Activated CD4-positive, alpha-beta memory T cell treated with anti-CD3 and anti-CD28 coated beads for 36 hours (primary cell): ENCODE measurements at regions of chr3 and their contacts with region 1.

Region 1: GRCh38 chr3:143016321-143016972 is 15.1 kb downstream of the U2SURP start:
- DNase-seq: no peak
- H3K4me3 Mint-ChIP-seq: no peak overlapping the region
- H3K27ac Mint-ChIP-seq: no peak overlapping the region
- H3K4me1 Mint-ChIP-seq: peaks cover 18% of the 10 kb centered on the region
- H3K27me3 Mint-ChIP-seq: no peaks in the 10 kb centered on the region

Region 2: GRCh38 chr3:142904639-142905436 is 111.6 kb before region 1 on chr3:
- CTCF ChIA-PET with region 1: no interaction called
- POLR2A ChIA-PET with region 1: no interaction called
- intact Hi-C with region 1: no loop called
- DNase-seq: no peak
- H3K4me3 Mint-ChIP-seq: no peak overlapping the region
- H3K27ac Mint-ChIP-seq: no peak overlapping the region
- H3K4me1 Mint-ChIP-seq: peaks cover 3% of the 10 kb centered on the region
- H3K27me3 Mint-ChIP-seq: peaks cover 21% of the 10 kb centered on the region

Region 3: GRCh38 chr3:142929109-142929508 is 87.3 kb before region 1 on chr3:
- CTCF ChIA-PET with region 1: no interaction called
- POLR2A ChIA-PET with region 1: no interaction called
- intact Hi-C with region 1: no loop called
- DNase-seq: peak; percentile 60
- H3K4me3 Mint-ChIP-seq: no peak overlapping the region
- H3K27ac Mint-ChIP-seq: no peak overlapping the region
- H3K4me1 Mint-ChIP-seq: no peaks in the 10 kb centered on the region
- H3K27me3 Mint-ChIP-seq: peaks cover 30% of the 10 kb centered on the region

Region 4: DNA sequence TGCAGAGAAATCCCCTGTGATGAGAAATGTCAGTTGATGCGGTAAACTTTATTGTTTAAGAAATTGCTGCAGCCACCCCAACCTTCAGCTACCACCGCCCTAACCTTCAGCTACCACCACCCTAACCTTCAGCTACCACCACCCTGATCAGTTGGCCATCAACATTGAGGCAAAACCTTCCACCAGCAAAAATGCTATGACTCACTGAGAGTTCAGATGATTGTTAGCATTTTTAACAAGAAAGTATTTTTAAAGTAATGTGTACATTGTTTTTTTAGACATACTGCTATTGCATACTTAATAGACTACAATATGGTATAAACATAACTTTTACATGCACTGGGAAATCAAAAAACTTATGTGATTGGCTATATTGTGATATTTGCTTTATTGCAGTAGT is 14.9 kb after region 1 on chr3:
- CTCF ChIA-PET with region 1: interaction called, 5 read pairs
- POLR2A ChIA-PET with region 1: no interaction called
- intact Hi-C with region 1: loop called (anchors 2 kb)
- DNase-seq: no peak
- H3K4me3 Mint-ChIP-seq: no peak overlapping the region
- H3K27ac Mint-ChIP-seq: no peak overlapping the region
- H3K4me1 Mint-ChIP-seq: peaks cover 7% of the 10 kb centered on the region
- H3K27me3 Mint-ChIP-seq: no peaks in the 10 kb centered on the region

Region 5: DNA sequence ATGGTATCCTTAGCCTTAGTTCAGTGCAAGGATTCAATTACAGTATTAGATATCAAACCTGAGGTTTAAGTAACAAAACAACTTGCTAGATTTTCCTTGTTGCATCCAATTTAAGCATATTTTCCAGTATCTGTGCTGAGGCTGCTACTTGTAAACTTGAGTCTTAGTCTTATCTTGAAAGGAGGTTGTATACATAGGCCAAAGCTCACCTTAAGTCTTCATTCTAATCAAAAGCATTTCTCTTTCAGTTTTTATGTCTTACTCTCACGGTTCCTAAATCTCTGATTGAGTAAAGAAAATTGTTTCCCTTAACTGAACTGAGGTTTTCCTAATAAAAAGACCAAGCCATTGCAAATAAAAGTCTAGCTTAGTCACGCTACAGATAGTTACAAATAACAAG is 37.6 kb after region 1 on chr3:
- CTCF ChIA-PET with region 1: interaction called, 4 read pairs
- POLR2A ChIA-PET with region 1: no interaction called
- intact Hi-C with region 1: loop called (anchors 5 kb)
- DNase-seq: no peak
- H3K4me3 Mint-ChIP-seq: no peak overlapping the region
- H3K27ac Mint-ChIP-seq: no peak overlapping the region
- H3K4me1 Mint-ChIP-seq: no peaks in the 10 kb centered on the region
- H3K27me3 Mint-ChIP-seq: no peaks in the 10 kb centered on the region